GM13977 (cell line): ENCODE measurements at regions of chr13 and their contacts with region 1.

Region 1: DNA sequence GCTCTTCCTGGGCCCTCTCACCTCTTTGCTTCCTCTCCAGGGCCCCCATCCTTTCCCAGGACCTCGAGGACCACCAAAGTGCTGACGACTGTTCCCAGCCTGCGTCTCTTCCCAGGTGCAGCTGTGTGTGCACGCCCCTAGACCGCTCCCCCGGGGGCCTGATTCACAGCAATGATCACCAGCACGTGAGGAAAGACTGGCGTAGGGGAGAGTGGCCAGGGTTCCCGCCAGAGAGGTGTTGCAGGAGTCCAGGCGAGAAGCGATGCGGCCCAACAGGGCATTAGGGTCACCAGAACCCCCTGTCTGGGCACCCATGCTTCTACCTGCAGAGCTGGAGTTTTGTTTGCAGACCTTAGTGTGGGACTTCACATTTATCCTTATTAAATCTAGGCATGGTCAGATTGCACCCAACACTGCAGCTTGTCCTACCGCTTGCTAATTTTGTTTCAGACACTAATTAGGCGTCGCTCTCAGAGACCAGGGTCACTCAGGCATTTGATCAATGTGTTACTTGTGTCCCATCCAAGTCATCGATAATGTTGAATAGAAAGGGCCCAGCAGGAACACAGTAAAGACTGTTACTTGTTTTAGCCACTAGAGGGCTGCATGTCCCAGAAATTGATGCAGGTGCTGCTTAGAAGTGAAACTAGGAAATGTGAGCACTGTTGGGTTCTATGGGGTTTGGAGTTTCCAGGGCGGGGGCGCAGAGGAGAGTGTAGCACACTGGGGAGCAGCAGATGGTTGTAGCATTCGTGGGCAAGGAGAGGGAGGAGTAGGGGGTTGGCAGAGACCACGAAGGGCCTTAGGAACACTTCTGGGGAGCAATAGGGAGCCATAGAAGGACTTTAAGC is 53.2 kb downstream of the CDADC1 start:
- DNase-seq: peak; percentile 84
- CTCF ChIP-seq: peak; percentile 84

Region 2: GRCh38 chr13:48853728-48854102 is 447.2 kb before region 1 on chr13:
- in situ Hi-C with region 1: no loop called
- DNase-seq: no peak
- CTCF ChIP-seq: no peak

Region 3: DNA sequence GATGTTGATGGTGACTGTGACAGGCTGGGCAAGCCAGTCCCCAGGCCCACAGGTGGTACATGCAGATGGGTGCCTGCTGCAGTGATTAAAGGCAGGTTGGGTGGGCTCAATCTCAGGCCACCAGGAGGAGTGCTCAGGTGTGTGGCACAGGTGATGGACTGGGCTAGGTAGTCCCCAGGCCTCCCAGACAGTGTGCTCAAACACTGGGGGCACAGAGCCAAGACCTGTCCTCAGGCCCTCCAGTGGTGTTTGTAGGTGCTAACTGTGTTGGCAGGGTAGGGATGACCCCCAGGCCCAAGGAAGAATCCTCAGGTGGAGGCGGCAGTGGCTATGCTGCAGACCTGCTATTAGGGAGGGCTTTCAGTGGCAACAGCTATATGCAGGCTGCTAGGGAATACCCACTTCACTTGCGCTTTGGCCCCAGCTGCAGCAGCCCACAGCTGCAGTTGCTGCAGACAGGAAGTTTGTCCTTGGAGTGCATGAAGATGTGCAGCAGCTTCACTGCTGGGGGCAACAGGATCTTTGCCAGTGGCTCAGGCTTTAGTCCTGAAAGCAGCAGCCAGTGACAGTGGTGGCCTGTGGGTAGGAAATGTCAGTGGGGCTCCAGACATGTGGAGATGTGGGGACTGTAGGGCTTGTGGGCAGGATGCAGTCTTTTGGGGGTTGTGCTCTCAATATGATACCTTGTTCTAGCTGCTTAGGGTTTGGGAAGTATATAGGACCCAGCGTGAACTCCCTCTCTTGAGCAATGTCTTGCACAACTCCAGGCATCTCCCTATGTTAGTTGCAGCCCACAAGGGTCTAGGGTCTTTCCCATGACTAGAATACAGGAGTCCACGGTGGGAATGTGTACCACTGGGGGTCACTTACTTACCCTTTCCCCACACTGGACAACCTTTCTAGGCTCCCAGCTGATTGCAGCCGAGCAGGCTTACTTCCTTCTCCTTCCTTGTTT is 134.9 kb before region 1 on chr13:
- in situ Hi-C with region 1: no loop called
- DNase-seq: no peak
- CTCF ChIP-seq: no peak

Region 4: DNA sequence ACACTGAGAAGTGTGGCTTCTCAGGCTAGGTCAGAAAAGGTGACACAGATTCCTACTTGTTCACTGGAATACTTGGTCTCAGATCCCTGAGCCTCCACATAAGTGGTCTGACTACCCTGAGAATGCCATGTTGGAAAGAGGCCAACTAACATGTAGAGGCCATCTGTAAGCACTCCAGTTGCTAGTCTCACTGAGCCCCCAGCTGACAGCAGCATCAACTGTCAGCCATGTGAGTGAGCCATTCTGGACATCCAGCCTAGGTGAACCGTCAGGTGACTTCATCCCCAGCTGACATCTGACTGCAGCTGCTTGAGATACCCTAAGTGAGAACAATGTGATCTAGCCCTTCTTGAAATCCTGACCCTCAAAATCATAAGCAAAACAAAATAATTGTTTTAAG is 309.2 kb after region 1 on chr13:
- in situ Hi-C with region 1: loop called (anchors 10 kb)
- DNase-seq: no peak
- CTCF ChIP-seq: no peak

Region 5: DNA sequence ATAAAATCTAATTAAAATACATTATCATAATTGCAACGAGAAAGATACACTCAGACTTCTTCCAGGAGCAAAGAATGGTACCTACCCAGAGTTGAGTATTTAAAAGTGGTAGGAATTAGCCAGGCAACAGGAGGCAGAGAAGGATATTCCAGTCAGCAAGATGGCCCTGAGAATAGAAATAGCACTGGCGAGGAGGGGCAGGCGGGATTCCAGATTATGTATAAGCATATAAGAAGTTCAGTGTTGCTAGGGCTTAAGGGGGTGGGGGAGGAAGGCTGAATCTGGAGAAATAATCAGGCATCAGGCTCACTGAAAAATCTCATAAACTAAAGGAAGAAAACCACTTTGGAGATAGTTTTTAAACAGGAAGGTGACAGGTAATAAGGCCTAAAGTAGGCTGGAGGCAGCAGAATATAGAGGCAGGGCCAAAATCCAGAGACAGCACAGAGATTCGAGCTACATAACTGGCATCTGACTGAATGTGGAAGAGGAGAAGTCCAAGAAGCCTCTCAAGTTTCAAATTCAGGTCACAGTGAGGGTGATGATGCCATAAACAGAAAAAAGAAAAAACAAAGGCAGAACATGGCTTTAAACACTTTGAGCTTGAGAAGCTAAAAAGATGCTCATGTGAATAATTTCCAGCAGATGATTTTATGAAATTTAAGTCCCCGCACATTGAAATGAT is 484.1 kb after region 1 on chr13:
- in situ Hi-C with region 1: no loop called
- DNase-seq: no peak
- CTCF ChIP-seq: no peak

Region 6: DNA sequence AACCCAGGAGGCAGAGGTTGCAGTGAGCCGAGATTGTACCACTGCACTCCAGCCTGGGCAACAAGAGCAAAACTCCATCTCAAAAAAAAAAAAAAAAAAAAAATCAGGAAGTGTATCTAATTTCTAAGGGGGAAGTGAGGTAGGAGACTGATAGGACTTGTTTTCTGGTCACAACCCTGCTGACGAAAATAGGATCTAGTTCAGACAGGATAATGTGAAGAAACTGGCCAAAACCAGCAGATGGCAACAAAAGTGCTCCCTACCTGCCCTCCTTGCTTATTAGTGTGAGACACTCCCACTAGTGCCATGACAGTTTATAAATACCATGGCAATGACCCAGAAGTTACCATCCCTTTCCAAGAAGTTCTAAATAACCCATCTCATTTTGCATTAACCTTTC is 527.5 kb after region 1 on chr13:
- in situ Hi-C with region 1: loop called (anchors 25 kb)
- DNase-seq: no peak
- CTCF ChIP-seq: no peak